ENCODE measurements at regions of chr3 and their contacts with region 1.

Region 1: DNA sequence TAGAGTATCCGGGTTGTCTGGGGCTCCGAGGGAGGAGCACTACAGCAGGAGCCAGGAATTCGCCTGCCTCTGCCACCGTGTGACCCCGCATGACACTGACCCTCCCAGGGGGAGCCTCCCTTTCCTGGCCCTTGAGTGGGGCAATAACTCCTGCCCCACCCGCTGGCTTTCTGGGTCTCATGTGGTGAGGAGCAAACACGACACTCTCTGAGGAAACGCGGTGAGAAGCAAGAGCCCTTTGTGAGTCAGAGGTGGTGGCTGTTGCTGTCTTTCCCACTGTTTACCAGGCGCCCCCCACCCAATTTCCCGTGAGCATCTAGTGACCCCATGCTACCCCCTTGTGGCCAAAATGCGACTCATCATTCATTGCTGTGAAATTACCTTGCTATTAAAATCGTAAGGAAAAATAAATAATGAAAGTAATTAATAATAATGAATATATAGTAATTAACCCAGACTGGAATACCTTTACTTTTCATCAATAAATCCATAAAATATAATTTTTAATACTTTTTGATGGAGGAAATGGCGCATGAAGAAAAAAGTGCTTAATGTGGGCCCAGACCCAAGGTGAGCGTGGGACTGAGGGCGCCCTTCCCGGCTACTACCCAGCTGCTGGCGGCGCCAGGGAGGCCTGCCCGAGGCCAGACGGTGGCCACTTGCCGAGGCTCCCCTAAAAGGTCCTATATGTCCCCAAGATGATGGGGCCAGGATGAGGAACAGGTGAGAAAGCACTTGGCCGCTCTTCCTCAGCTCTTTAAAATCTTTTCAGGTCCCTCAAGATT is 29.3 kb downstream of the CCNL1 start:
- DNase-seq: peak; percentile 61
- H3K4me3 ChIP-seq: no peak overlapping the region
- H3K27ac ChIP-seq: peak overlapping the region; percentile 60
- H3K4me1 ChIP-seq: peaks cover 39% of the 10 kb centered on the region
- H3K27me3 ChIP-seq: no peaks in the 10 kb centered on the region
- CTCF ChIP-seq: peak; percentile 58 to 59
- POLR2A ChIP-seq: no peak

Region 2: GRCh38 chr3:156535162-156535627 is 595.5 kb before region 1 on chr3:
- CTCF ChIA-PET with region 1: interaction called, 12 read pairs
- POLR2A ChIA-PET with region 1: no interaction called
- dilution Hi-C with region 1: no loop called
- intact Hi-C with region 1: loop called (anchors 1 kb)
- DNase-seq: peak; percentile 94
- H3K4me3 ChIP-seq: no peak overlapping the region
- H3K27ac ChIP-seq: peak overlapping the region; percentile 55
- H3K4me1 ChIP-seq: peaks cover 7% of the 10 kb centered on the region
- H3K27me3 ChIP-seq: no peaks in the 10 kb centered on the region
- CTCF ChIP-seq: peak in 1 of 2 donors; percentile 22
- POLR2A ChIP-seq: peak; percentile 58

Region 3: DNA sequence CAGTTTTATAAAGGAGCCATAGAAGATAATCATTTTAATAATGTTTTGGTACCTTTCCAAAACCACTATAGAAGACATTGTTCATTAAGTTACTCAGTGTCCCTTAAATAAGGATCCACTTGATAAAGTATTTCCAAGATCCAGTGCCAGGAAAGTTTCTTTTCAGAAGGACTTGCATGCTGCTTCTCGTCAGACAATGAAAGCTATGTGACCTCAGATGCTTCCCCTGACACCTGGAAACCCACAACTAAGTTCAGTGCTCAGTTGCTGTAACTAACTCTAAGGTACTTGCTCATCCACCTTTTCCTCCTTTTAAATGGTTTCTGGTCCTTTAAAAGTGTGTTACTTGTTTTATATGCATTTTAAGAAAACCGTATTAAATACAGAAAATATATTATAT is 583.0 kb before region 1 on chr3:
- CTCF ChIA-PET with region 1: no interaction called
- POLR2A ChIA-PET with region 1: no interaction called
- dilution Hi-C with region 1: no loop called
- intact Hi-C with region 1: loop called (anchors 2 kb)
- DNase-seq: peak; percentile 51
- H3K4me3 ChIP-seq: no peak overlapping the region
- H3K27ac ChIP-seq: peak overlapping the region; percentile 42
- H3K4me1 ChIP-seq: peaks cover 93% of the 10 kb centered on the region
- H3K27me3 ChIP-seq: no peaks in the 10 kb centered on the region
- CTCF ChIP-seq: no peak
- POLR2A ChIP-seq: no peak

Region 4: GRCh38 chr3:156691920-156692319 is 438.7 kb before region 1 on chr3:
- CTCF ChIA-PET with region 1: no interaction called
- POLR2A ChIA-PET with region 1: no interaction called
- dilution Hi-C with region 1: loop called (anchors 25 kb)
- intact Hi-C with region 1: loop called (anchors 5 kb)
- DNase-seq: peak; percentile 91
- H3K4me3 ChIP-seq: peak overlapping the region in 1 of 3 experiments; percentile 64
- H3K27ac ChIP-seq: peak overlapping the region; percentile 85
- H3K4me1 ChIP-seq: peaks cover 58% of the 10 kb centered on the region
- H3K27me3 ChIP-seq: no peaks in the 10 kb centered on the region
- CTCF ChIP-seq: no peak
- POLR2A ChIP-seq: peak; percentile 63

Region 5: DNA sequence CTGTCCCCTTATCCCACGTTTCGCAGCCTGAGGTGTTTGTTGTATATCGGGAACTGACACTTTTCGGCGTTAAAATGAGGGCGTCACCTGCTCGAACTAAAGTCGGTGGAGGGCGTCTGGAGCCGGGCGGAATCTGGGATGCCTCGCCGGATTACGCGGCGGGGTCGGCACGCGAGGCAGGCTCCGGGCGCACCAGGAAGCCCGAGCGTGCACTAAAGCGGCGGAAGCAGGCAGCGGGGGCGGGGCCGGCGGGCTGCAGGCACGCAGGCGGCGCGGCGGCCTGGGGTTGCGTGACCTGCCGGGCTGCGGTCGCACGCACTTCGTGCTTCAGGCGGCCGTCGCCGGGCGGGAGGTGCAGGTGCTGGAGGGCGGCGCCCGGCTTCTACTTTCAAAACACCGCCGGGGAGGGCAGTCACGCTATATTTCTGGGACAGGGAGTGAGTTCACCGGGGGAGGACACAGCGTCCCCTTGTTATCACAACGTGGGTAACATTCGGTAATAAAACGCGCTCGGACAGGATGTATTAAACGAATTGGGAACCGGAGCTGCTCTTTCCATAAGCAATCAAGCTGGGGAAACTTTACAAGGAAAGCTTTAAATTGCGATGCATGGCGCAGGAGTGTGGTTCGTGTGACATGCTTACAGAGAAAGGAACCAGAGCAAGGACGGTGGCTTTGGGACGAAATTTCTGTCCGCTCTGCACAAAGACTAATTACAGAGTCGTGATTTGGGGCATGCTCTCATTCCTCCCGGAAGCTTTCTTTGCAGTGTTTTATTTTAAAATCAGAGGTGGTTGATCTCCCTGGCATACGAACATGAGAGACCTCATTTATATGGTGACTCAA is 313.6 kb before region 1 on chr3:
- CTCF ChIA-PET with region 1: interaction called, 3 read pairs
- POLR2A ChIA-PET with region 1: no interaction called
- dilution Hi-C with region 1: no loop called
- intact Hi-C with region 1: loop called (anchors 2 kb)
- DNase-seq: peak; percentile 86
- H3K4me3 ChIP-seq: peak overlapping the region in 2 of 3 experiments; percentile 37
- H3K27ac ChIP-seq: peak overlapping the region; percentile 91
- H3K4me1 ChIP-seq: peaks cover 56% of the 10 kb centered on the region
- H3K27me3 ChIP-seq: no peaks in the 10 kb centered on the region
- CTCF ChIP-seq: no peak
- POLR2A ChIP-seq: no peak

Region 6: DNA sequence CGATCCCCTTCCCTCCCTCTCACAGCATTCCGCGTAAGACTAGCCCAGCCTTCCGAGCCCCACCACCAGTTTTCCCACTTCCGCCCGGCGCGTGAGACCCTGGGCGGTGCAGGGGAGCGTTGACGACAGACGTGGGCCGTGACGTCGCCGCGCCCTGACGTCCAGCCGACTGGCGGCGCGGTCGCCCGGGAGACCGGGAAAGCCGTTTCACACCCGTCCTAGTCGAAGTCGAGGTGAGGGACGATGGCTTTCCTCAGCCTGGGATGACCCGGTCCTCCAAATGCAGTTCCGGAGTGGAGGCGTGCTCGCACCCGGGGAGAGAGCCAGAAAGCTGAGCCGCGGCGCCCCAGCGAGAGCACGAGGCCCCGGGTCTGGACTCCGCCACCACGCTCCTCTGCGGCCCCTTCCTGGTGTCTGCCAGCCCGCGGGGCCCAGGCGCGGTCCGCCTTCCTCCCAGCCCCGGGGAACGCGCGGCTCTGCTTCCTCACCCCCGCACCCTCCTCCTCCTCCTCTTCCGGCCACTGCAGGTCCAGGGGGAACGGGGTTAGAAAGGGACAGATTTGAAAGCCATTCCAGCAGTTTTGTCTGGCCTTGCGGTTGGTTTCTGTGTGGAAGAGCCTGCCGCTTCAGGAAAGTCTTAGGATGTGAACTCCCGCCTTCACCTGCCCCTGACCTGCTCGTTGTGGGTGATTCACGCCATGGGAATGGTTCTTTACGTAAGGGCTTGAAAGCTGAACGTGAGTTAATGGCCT is 304.3 kb before region 1 on chr3 and contains the start of gene LEKR1:
- CTCF ChIA-PET with region 1: no interaction called
- POLR2A ChIA-PET with region 1: no interaction called
- dilution Hi-C with region 1: no loop called
- intact Hi-C with region 1: loop called (anchors 2 kb)
- DNase-seq: peak; percentile 89
- H3K4me3 ChIP-seq: peak within 1 kb of the TSS; percentile 45 to 90 (median 55)
- H3K27ac ChIP-seq: peak within 1 kb of the TSS; percentile 100
- H3K4me1 ChIP-seq: peaks cover 20% of the 10 kb centered on the region
- H3K27me3 ChIP-seq: no peaks in the 10 kb centered on the region
- CTCF ChIP-seq: no peak
- POLR2A ChIP-seq: peak; percentile 53
- total RNA-seq, gene LEKR1: 0.21 and 0.64 TPM in 2 replicates

Measured in endothelial cell of umbilical vein (primary cell).